ENCODE measurements at regions of chr19 and their contacts with region 1.

Region 1: GRCh38 chr19:14505488-14506432 is 9.8 kb upstream of the GIPC1 start:
- DNase-seq: peak; percentile 59 to 90 (median 76)
- ATAC-seq: peak; percentile 31 to 42
- H3K4me3 Mint-ChIP-seq: peak overlapping the region; percentile 56 to 79 (median 71)
- H3K27ac Mint-ChIP-seq: peak overlapping the region; percentile 90 to 99 (median 98)
- H3K4me1 Mint-ChIP-seq: peaks cover 21 to 72% (median 62%) of the 10 kb centered on the region in 4 donors
- H3K27me3 Mint-ChIP-seq: no peaks in the 10 kb centered on the region

Region 2: DNA sequence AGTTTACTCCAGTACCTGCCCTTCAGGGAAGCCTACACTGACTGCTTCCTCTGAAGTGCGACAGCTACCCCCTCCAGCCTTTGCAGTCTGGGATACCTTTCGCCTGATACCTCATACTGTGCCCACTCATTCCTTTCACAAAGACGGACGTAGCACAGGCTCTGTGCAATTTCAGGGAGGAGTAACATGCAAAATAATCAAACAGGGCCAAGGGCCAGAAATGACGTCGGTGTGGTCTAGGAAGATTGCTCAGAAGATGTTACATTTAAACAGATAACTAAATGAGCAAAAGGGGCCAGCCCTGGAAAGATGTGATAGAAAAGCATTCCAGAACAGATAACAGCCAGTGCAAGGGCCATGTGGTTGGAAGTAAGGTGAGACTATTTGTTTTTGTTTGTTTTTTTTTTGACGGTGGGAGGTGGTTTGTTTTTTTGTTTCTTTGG is 80.0 kb before region 1 on chr19:
- POLR2A ChIA-PET with region 1: no interaction called
- DNase-seq: no peak
- ATAC-seq: no peak
- H3K4me3 Mint-ChIP-seq: no peak overlapping the region
- H3K27ac Mint-ChIP-seq: no peak overlapping the region
- H3K4me1 Mint-ChIP-seq: peaks cover under 1 to 4% (median 2%) of the 10 kb centered on the region in 4 donors
- H3K27me3 Mint-ChIP-seq: peaks cover 0 to 1% (median 0%) of the 10 kb centered on the region in 5 donors

Region 3: DNA sequence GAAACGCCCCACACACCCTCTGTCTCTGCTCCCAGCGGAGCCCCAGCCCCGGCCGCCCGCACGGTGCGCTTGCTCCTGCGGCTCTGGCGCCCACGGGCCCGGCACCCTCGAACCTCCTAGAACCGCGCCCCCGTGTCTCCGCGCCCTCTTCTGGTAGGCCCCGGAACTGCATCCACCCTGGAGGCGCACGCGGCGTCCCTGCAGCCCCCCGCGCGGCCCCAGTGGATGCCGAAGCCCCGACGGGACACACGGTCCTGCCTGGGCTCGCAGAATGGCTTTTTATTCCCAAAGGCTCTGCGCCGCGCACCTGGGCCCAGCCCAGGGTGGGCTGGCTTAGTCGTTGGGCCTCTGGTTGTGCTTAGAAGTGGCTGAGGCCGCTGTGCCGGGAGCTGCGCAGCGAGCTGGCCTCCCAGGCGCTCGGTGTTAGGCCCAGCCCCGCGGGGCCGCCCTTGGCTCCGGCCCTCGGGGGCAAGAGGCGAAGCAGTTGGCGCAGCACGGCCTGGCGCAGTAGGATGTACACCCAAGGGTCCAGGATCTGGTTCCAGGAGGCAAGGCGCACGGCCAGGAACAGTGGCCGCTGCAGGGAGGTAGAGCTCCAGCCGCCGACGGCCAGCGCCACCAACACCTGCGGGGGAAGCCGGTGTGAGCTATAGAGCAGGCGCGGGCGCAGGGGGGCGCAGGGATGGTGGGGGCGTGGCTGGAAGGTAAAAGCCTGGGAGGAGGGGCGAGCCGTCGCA is 33.4 kb before region 1 on chr19:
- POLR2A ChIA-PET with region 1: no interaction called
- DNase-seq: peak; percentile 66 to 93 (median 87)
- ATAC-seq: peak; percentile 82
- H3K4me3 Mint-ChIP-seq: peak overlapping the region; percentile 44 to 80 (median 70)
- H3K27ac Mint-ChIP-seq: peak overlapping the region in 2 of 10 donors; percentile 53 to 56
- H3K4me1 Mint-ChIP-seq: peaks cover 18 to 48% (median 32%) of the 10 kb centered on the region in 4 donors
- H3K27me3 Mint-ChIP-seq: peaks cover 11 to 25% (median 14%) of the 10 kb centered on the region in 5 donors

Region 4: DNA sequence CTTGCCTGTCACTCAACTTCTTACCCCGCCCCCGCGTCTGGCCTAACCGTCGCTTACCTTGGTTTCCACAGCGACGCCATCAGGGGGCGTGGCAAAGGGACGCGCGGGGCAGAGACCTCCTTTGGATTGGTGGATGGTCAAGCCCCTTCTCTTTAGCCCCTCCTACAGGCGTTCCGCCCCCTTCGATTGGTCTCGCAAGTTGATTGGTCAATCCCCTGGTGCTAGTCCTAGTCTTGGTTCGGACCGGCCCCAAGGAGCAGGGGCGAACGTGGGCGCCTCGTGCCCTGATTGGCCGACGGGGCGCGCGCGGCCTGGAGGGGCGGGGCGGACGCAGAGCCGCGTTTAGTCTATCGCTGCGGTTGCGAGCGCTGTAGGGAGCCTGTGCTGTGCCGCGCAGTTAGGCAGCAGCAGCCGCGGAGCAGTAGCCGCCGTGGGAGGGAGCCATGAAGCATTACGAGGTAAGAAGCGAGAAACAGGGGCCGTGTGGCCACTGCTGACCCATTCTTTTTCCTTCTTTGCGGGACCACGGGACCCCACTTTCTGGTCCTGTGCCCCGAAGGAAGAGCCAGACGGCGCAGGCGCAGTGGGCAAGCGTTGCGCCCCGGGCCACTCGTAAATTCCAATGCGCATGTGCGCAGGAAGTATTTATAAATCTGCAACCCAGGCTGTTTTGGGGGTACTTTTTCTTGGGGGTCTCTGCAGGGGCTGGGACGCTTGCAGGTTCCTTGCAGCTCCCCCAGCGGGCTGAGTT is 23.7 kb after region 1 on chr19 and contains the start of gene TECR:
- POLR2A ChIA-PET with region 1: interaction called, 609 read pairs
- DNase-seq: peak; percentile 98 to 100 (median 100)
- ATAC-seq: peak; percentile 90 to 91
- H3K4me3 Mint-ChIP-seq: peak within 1 kb of the TSS; percentile 91 to 99 (median 96)
- H3K27ac Mint-ChIP-seq: peak within 1 kb of the TSS; percentile 95 to 100 (median 100)
- H3K4me1 Mint-ChIP-seq: peaks cover 12 to 67% (median 40%) of the 10 kb centered on the region in 4 donors
- H3K27me3 Mint-ChIP-seq: peaks cover 0 to 2% (median 0%) of the 10 kb centered on the region in 5 donors
- polyA plus RNA-seq, gene TECR: 193 to 300 (median 261) TPM

Region 5: DNA sequence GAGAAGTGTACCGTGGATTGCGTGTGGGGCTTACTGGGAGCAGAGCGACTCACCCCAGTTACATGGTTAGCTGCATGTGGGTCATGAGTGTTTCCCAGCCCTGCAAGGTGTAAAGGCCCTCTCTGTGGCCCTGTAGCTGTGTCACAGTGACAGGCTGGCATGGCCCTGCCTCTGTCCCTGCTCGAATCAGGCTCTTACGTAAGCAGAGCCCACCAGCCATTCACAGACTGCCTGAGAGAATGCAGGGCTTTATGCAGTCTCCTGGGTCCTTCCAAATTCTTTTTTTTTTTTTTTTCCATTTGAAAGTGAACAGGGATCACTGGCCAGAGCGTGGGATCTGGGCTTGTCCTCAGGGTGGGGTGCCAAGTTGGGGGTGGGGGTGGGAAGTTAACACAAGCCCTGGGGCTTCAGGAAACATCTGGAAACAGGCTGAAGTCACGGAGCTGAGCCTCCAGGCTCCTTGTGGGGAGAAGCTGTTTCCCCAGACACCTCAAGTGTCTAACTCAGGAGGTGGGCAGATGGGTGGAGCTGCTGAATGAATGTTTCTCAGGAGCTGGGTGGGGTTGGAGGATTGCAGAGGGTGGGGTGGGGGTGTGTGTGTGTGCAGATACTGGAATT is 37.1 kb after region 1 on chr19:
- POLR2A ChIA-PET with region 1: interaction called, 10 read pairs
- DNase-seq: no peak
- ATAC-seq: no peak
- H3K4me3 Mint-ChIP-seq: no peak overlapping the region
- H3K27ac Mint-ChIP-seq: peak overlapping the region in 2 of 10 donors; percentile 25 to 66
- H3K4me1 Mint-ChIP-seq: peaks cover 16 to 64% (median 37%) of the 10 kb centered on the region in 4 donors
- H3K27me3 Mint-ChIP-seq: no peaks in the 10 kb centered on the region

Region 6: GRCh38 chr19:14556662-14557188 is 51.0 kb after region 1 on chr19:
- POLR2A ChIA-PET with region 1: interaction called, 97 read pairs
- DNase-seq: peak; percentile 41 to 78 (median 64)
- ATAC-seq: peak; percentile 78 to 81
- H3K4me3 Mint-ChIP-seq: peak overlapping the region; percentile 41 to 79 (median 68)
- H3K27ac Mint-ChIP-seq: peak overlapping the region; percentile 67 to 92 (median 85)
- H3K4me1 Mint-ChIP-seq: peaks cover 26 to 73% (median 52%) of the 10 kb centered on the region in 4 donors
- H3K27me3 Mint-ChIP-seq: no peaks in the 10 kb centered on the region

Region 7: GRCh38 chr19:14571695-14572490 is 66.1 kb after region 1 on chr19 and contains the start of gene NDUFB7:
- POLR2A ChIA-PET with region 1: interaction called, 18 read pairs
- DNase-seq: peak; percentile 76 to 94 (median 87)
- ATAC-seq: peak; percentile 93 to 97
- H3K4me3 Mint-ChIP-seq: peak within 1 kb of the TSS; percentile 93 to 98 (median 95)
- H3K27ac Mint-ChIP-seq: peak within 1 kb of the TSS; percentile 83 to 96 (median 94)
- H3K4me1 Mint-ChIP-seq: peaks cover 19 to 53% (median 43%) of the 10 kb centered on the region in 4 donors
- H3K27me3 Mint-ChIP-seq: no peaks in the 10 kb centered on the region
- polyA plus RNA-seq, gene NDUFB7: 209 to 236 (median 230) TPM

Measured in naive thymus-derived CD8-positive, alpha-beta T cell (primary cell).